Motor neuron (in vitro differentiated cells): ENCODE measurements at regions of chr10 and their contacts with region 1.

Region 1: GRCh38 chr10:26556748-26557640 is 118.9 kb downstream of the APBB1IP start:
- ATAC-seq: peak; percentile 51 to 69 (median 58)
- H3K4me3 ChIP-seq: no peak overlapping the region
- H3K27ac ChIP-seq: no peak overlapping the region
- H3K4me1 ChIP-seq: peaks cover 9 to 16% of the 10 kb centered on the region in 2 donors

Region 2: GRCh38 chr10:25725918-25726716 is 830.9 kb before region 1 on chr10:
- in situ Hi-C with region 1: loop called in 3 of 9 experiments (anchors 25 kb)
- ATAC-seq: peak in 5 of 8 experiments; percentile 44 to 75 (median 66)
- H3K4me3 ChIP-seq: no peak overlapping the region
- H3K27ac ChIP-seq: no peak overlapping the region
- H3K4me1 ChIP-seq: no peaks in the 10 kb centered on the region

Region 3: GRCh38 chr10:25867320-25867719 is 689.7 kb before region 1 on chr10:
- in situ Hi-C with region 1: loop called in 1 of 9 experiments (anchors 25 kb)
- ATAC-seq: no peak
- H3K4me3 ChIP-seq: no peak overlapping the region
- H3K27ac ChIP-seq: no peak overlapping the region
- H3K4me1 ChIP-seq: no peaks in the 10 kb centered on the region

Region 4: DNA sequence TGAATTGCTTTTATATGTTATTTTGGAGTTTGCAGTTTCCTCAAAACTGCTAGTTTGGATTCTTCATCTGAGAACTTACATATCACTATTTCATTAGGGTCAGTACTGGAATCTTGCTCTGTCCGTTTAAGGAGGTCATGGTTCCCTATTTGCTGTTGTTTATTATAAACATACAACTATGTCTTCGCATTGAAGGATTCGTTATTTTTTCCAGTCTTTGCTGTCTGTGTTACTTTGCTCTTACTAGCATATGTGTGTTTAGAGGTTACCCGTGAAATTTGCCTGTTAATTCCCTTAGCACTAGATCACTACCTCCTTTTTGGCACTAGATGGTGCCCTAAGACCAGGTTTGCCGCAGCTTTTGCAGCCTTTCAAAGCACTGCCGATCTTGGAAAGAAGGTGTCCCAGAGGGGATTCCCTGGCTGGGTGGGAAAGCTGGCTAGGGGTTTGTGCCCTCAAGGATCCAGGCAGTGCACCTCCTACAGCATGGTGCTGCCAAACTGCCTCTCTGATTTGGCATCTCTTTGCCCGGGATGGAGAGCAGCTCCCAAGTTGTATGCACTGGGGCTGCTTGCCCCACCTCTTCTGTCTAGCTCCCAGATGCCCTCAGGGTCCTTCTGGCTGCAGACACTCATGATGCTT is 221.9 kb before region 1 on chr10:
- in situ Hi-C with region 1: loop called in 2 of 9 experiments (anchors 10 to 25 kb)
- ATAC-seq: peak in 7 of 8 experiments; percentile 36 to 98 (median 81)
- H3K4me3 ChIP-seq: no peak overlapping the region
- H3K27ac ChIP-seq: no peak overlapping the region
- H3K4me1 ChIP-seq: no peaks in the 10 kb centered on the region

Region 5: GRCh38 chr10:26468700-26469099 is 88.3 kb before region 1 on chr10:
- in situ Hi-C with region 1: no loop called
- ATAC-seq: no peak
- H3K4me3 ChIP-seq: no peak overlapping the region
- H3K27ac ChIP-seq: no peak overlapping the region
- H3K4me1 ChIP-seq: no peaks in the 10 kb centered on the region

Region 6: GRCh38 chr10:26881600-26882331 is 324.8 kb after region 1 on chr10:
- in situ Hi-C with region 1: no loop called
- ATAC-seq: peak; percentile 68 to 99 (median 87)
- H3K4me3 ChIP-seq: no peak overlapping the region
- H3K27ac ChIP-seq: no peak overlapping the region
- H3K4me1 ChIP-seq: no peaks in the 10 kb centered on the region